Activated T-helper 2 cell treated with anti-CD3 and anti-CD28 coated beads, Interferon-gamma antibody, Interleukin-2, Interleukin-4, amounts not matched to agents 10 μg/mL and 5 μg/mL and 100 μg/mL, durations not matched to agents 14 hours and 24 hours and 36 hours (primary cell): ENCODE measurements at regions of chr1 and their contacts with region 1.

Region 1: DNA sequence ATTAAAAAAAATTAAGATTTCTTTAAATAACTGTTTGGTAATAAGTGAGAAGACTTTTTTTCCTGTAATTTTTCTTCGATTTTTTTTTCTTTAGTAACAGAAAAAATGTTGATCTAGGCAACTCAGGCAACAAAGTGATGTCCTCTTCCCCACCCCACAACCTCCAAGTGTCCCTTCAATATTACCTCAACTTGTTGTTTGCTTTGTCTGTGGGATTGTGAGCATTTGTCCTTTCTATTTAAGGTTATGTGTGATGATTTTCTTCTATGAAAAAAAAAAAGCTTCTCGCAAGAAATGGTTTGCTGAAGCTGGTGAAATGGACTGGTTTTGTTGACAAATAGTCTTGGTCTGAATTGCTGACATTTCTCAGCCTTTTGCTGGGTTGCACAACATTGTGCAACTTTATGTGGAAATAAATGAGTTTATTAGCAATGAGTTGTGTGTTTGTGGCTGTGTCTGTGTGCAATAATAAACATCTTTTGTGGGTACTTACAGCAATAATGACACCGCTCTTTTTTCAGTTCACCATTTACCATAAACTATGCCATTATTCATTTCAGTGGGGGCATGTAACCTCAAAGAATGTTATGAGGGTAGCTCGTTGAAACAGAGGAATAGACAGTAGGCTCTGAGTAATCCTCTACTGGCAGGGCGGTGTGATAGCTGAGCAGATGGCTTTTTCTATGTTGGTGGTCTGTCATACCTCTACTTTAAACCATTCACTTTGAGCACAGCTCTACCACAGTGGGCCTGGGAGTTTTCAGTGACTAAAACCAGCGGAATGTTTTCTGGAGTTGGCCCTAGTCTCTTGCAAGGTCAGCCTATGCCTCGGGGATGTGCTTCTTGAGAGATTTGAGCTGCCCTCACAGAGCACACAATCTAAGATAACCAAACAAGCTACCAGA is 218.5 kb downstream of the HLX start:
- DNase-seq: no peak
- H3K4me3 Mint-ChIP-seq: no peak overlapping the region
- H3K27ac Mint-ChIP-seq: peak overlapping the region; percentile 54
- H3K4me1 Mint-ChIP-seq: peaks cover 18% of the 10 kb centered on the region
- H3K27me3 Mint-ChIP-seq: no peaks in the 10 kb centered on the region

Region 2: DNA sequence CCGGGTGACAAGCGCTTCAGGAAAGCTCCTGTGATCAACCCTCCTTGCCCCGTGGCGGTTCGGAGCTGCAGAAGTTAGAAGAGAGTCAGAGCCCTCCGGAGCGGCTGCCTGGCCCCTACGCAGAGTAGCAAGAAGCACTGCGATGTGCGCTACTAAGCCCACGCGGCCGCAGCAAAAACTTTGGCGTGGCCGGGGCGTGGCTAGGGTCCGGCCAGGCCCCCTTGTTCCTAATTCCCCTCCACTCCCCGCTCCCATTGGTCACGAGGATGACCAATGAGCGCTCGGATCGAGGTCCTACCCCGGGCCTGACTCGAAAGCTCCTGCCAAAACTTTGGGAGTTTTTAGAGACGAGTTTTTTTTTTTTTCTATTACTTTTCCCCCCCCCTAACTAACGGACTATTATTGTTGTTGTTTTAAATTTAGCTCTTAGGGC is 218.6 kb before region 1 on chr1 and contains the start of gene HLX:
- intact Hi-C with region 1: loop called (anchors 10 kb)
- DNase-seq: peak; percentile 15
- H3K4me3 Mint-ChIP-seq: peak within 1 kb of the TSS; percentile 85
- H3K27ac Mint-ChIP-seq: peak within 1 kb of the TSS; percentile 78
- H3K4me1 Mint-ChIP-seq: peaks cover 31% of the 10 kb centered on the region
- H3K27me3 Mint-ChIP-seq: peaks cover 70% of the 10 kb centered on the region
- total RNA-seq, gene HLX: 8.2 and 10.4 TPM in 2 replicates

Region 3: DNA sequence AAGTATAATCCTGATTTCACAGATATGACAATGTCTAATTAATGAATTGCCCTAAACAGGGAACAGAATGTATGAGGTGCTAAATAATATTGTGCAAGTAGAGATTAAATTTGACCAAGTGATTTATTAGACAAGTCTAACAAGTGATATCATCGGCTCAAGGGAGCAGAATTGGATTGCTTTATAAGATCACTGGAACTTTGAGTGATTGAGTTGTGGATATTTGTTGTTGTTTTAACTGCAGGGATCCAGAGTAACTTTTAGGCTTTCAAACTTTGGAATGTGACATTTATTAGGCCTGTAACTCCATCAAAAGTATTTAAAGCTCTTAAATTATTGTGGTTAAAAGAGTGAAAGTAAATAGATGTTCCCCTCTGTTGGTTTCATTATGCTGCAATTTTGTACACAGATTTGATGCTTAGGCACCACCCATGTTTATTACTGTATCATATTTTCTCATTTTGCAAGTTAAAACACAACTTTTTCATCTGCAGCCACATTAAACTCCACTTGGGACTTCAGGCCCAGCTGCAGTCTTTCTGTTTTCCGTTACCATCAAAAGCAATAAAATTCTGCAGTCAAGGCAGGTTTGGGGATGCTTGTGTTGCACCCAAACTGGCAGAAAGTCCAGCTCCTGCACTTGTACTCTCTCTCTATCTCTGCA is 11.9 kb before region 1 on chr1:
- intact Hi-C with region 1: loop called (anchors 2 kb)
- DNase-seq: no peak
- H3K4me3 Mint-ChIP-seq: no peak overlapping the region
- H3K27ac Mint-ChIP-seq: no peak overlapping the region
- H3K4me1 Mint-ChIP-seq: peaks cover 9% of the 10 kb centered on the region
- H3K27me3 Mint-ChIP-seq: no peaks in the 10 kb centered on the region

Region 4: DNA sequence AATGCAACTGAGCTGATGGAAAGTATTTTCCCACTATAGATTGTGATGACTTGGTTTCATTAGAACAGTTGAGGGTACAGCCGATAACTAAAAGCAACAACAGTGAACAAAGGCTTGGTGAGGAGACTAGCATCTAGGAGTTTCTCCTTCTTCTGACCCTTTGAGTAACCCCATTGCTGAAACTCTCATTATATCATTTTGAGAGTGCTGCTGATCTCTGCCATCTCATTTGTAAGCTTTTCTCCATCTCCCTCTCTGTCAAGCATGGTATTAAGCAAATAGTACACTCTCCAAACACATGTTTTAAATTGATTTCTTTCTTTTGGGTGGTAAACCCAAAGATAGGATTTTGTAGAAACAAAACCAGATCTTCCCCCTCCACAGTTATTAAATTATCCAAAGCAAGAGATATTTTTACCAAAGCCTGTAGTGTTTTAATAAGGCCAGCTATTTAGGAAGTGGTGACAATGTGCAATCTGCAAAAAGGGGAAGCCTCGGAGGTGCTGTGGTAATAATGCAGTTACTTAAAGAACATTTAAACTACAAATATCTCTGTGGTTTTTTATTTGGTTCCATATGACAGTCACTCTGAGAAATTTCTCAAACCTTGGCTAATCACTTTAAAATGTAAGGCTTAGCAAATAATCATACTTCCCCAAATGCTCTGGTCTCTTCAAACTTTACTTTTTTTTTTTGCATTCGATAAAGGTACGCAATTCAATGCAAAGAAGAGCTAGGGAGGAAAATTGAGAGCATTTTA is 69.0 kb after region 1 on chr1:
- intact Hi-C with region 1: loop called (anchors 5 kb)
- DNase-seq: no peak
- H3K4me3 Mint-ChIP-seq: no peak overlapping the region
- H3K27ac Mint-ChIP-seq: no peak overlapping the region
- H3K4me1 Mint-ChIP-seq: peaks cover 7% of the 10 kb centered on the region
- H3K27me3 Mint-ChIP-seq: no peaks in the 10 kb centered on the region